ENCODE measurements at regions of chr1 and their contacts with region 1.

Region 1: GRCh38 chr1:183318433-183318832 is 99.7 kb downstream of the NMNAT2 start:
- DNase-seq: peak; percentile 85
- ATAC-seq: peak; percentile 98

Region 2: DNA sequence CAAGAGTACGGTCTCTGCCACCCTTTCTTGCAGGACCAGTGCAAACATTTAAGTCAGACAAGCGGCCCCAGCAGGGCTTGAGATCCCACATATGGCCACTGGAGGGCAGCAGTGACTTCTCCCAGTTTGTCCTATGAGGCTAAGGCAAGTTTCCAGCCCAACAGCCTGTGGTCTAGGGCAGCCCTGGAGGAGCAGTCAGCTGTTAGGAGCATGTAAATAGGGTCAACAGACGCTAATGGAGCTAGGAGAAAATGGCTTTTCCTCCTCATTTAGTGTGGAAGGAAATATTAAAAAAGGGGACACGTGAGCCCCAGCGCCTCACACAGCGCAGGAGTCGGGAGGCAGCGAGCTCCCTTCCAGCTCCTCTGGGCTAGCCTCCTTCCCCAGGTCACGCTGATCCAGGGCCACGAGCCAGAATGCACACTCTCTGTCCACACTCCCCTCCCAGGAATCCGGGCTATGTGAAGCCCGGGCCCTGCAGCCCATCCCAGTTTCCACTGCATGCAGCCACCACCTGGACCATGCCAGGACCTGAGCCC is 36.8 kb before region 1 on chr1:
- intact Hi-C with region 1: loop called (anchors 5 kb)
- DNase-seq: peak; percentile 95
- ATAC-seq: peak; percentile 88

Measured in sciatic nerve (tissue), 2 donors.